Calu3 (cell line): ENCODE measurements at regions of chr10 and their contacts with region 1.

Region 1: GRCh38 chr10:26881600-26882331 is 21.0 kb upstream of the ABI1 start:
- DNase-seq: peak; percentile 14
- H3K4me3 Mint-ChIP-seq: no peak overlapping the region
- H3K27ac Mint-ChIP-seq: peak overlapping the region; percentile 9
- H3K4me1 Mint-ChIP-seq: peaks cover 17% of the 10 kb centered on the region
- H3K27me3 Mint-ChIP-seq: peaks cover 20% of the 10 kb centered on the region
- CTCF ChIP-seq: peak; percentile 19

Region 2: GRCh38 chr10:26334932-26335573 is 546.7 kb before region 1 on chr10:
- CTCF ChIA-PET with region 1: interaction called, 4 read pairs
- intact Hi-C with region 1: loop called (anchors 2 kb)
- DNase-seq: peak; percentile 56
- H3K4me3 Mint-ChIP-seq: peak overlapping the region; percentile 62
- H3K27ac Mint-ChIP-seq: no peak overlapping the region
- H3K4me1 Mint-ChIP-seq: peaks cover 21% of the 10 kb centered on the region
- H3K27me3 Mint-ChIP-seq: no peaks in the 10 kb centered on the region
- CTCF ChIP-seq: peak; percentile 85

Region 3: GRCh38 chr10:26612151-26612915 is 269.4 kb before region 1 on chr10:
- CTCF ChIA-PET with region 1: no interaction called
- intact Hi-C with region 1: loop called (anchors 5 kb)
- DNase-seq: peak; percentile 12
- H3K4me3 Mint-ChIP-seq: no peak overlapping the region
- H3K27ac Mint-ChIP-seq: no peak overlapping the region
- H3K4me1 Mint-ChIP-seq: no peaks in the 10 kb centered on the region
- H3K27me3 Mint-ChIP-seq: no peaks in the 10 kb centered on the region
- CTCF ChIP-seq: no peak

Region 4: GRCh38 chr10:26725837-26726727 is 155.7 kb before region 1 on chr10:
- CTCF ChIA-PET with region 1: interaction called, 29 read pairs
- intact Hi-C with region 1: loop called (anchors 1 kb)
- DNase-seq: peak; percentile 56
- H3K4me3 Mint-ChIP-seq: no peak overlapping the region
- H3K27ac Mint-ChIP-seq: no peak overlapping the region
- H3K4me1 Mint-ChIP-seq: no peaks in the 10 kb centered on the region
- H3K27me3 Mint-ChIP-seq: no peaks in the 10 kb centered on the region
- CTCF ChIP-seq: peak; percentile 62

Region 5: GRCh38 chr10:26737730-26738129 is 144.0 kb before region 1 on chr10:
- CTCF ChIA-PET with region 1: no interaction called
- intact Hi-C with region 1: no loop called
- DNase-seq: no peak
- H3K4me3 Mint-ChIP-seq: no peak overlapping the region
- H3K27ac Mint-ChIP-seq: no peak overlapping the region
- H3K4me1 Mint-ChIP-seq: no peaks in the 10 kb centered on the region
- H3K27me3 Mint-ChIP-seq: no peaks in the 10 kb centered on the region
- CTCF ChIP-seq: no peak

Region 6: GRCh38 chr10:27192284-27192683 is 310.5 kb after region 1 on chr10:
- CTCF ChIA-PET with region 1: no interaction called
- intact Hi-C with region 1: no loop called
- DNase-seq: peak; percentile 45
- H3K4me3 Mint-ChIP-seq: no peak overlapping the region
- H3K27ac Mint-ChIP-seq: peak overlapping the region; percentile 60
- H3K4me1 Mint-ChIP-seq: peaks cover 9% of the 10 kb centered on the region
- H3K27me3 Mint-ChIP-seq: no peaks in the 10 kb centered on the region
- CTCF ChIP-seq: no peak